Body of pancreas (tissue), 4 donors: ENCODE measurements at regions of chr5 and their contacts with region 1.

Region 1: GRCh38 chr5:132820162-132820754 is 7.2 kb downstream of the SOWAHA start:
- DNase-seq: peak; percentile 93 to 96 (median 94)
- ATAC-seq: peak; percentile 91
- H3K4me3 ChIP-seq: no peak overlapping the region
- H3K27ac ChIP-seq: no peak overlapping the region
- H3K4me1 ChIP-seq: peaks cover 17% of the 10 kb centered on the region
- H3K27me3 ChIP-seq: no peaks in the 10 kb centered on the region
- CTCF ChIP-seq: peak; percentile 89 to 94 (median 91)
- POLR2A ChIP-seq: no peak

Region 2: GRCh38 chr5:132753135-132753987 is 66.9 kb before region 1 on chr5:
- intact Hi-C with region 1: loop called (anchors 5 kb)
- DNase-seq: peak in 3 of 4 donors; percentile 18 to 53 (median 51)
- ATAC-seq: peak; percentile 43
- H3K4me3 ChIP-seq: no peak overlapping the region
- H3K27ac ChIP-seq: no peak overlapping the region
- H3K4me1 ChIP-seq: no peaks in the 10 kb centered on the region
- H3K27me3 ChIP-seq: no peaks in the 10 kb centered on the region
- CTCF ChIP-seq: peak in 2 of 7 experiments; percentile 13 to 23
- POLR2A ChIP-seq: no peak

Region 3: DNA sequence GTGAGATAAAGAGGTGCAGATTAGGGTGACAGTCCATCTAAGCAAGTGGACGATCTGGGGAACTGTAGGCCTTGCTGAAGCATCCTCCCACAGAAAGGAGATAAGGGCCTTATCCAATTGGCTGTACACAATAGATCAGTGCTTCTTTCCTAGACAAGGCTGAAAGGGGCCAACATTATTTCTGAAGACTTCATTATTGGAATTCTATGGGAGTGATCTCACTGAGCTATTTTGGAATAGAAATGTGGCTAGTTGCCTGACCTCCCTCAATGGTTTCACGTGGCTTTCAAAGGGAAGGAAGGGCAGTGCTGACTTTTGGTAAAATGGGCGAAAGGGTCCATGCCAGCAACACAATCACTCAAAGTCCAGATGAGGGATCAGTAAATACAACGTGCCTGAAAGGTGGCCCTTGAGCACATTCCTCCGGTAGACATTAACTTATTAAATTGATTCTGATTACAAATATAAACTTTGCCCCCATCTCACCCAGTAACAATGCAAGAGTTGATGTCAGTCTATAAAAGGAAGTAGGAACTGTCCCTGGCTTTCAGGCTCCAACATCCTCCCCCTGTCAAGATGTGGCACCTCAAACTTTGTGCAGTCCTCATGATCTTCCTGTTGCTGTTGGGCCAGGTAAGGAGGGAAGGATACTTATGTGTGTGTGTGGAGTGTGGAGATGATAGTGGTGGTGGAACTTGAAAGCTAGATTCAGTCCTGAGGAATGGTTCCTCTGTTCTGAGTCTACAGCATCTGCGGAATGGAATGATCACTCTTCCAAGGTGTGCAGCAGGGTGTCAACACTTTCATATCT is 53.1 kb after region 1 on chr5 and contains the start of gene LEAP2:
- intact Hi-C with region 1: no loop called
- DNase-seq: peak; percentile 49 to 84 (median 59)
- ATAC-seq: peak; percentile 88
- H3K4me3 ChIP-seq: no peak within 1 kb of the TSS
- H3K27ac ChIP-seq: peak within 1 kb of the TSS; percentile 73 to 82 (median 78)
- H3K4me1 ChIP-seq: peaks cover 42% of the 10 kb centered on the region
- H3K27me3 ChIP-seq: no peaks in the 10 kb centered on the region
- CTCF ChIP-seq: no peak
- POLR2A ChIP-seq: peak in 2 of 3 donors; percentile 15 to 37
- total RNA-seq, gene LEAP2: 3.4 to 9.6 TPM